ENCODE measurements at regions of chr2 and their contacts with region 1.

Region 1: DNA sequence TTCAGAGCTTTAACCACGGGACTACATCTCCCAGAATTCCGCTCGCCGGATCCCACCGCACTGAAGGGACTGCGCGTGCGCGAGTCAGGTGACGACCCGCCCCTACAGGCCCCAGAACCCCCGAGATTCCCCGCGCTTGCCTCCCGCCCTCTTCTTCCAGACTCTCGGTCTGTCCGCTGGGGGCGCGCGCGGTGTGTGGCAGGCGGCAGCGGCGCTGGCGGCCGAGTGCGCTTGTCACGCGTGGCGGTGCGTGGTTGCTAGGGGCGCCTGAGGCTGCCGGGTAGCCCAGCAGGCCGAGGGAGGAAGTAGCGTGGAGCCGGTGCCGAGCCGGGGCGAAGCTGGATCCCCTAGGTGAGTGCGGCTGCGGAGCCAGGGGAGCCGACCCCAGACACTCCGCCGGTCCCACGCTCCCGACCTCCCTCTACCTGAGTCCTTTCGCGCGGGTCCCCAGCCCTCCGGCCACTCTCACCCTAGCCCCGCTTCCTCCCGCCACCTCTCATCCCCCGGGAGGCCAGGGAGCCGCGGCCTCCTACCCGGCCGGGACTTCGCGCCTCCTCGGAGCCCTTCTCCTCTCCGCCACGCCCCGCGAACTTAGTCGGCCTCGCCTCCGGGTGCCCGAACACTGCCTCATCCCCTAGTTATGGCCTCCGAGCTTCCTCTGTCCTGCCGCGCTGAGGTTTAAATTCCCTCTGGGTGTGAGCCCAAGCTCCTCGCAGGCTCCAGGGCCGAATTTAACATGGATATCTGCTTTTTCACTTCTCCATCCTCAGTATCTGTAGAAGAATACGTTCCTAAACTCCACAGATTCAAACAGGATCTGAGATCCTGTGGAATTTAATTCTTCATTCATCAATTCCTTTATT is at the start of gene TTLL4:
- DNase-seq: peak; percentile 99
- ATAC-seq: peak; percentile 98
- H3K4me3 Mint-ChIP-seq: peak within 1 kb of the TSS; percentile 96
- H3K27ac Mint-ChIP-seq: peak within 1 kb of the TSS; percentile 80
- H3K4me1 Mint-ChIP-seq: peaks cover 20% of the 10 kb centered on the region
- H3K27me3 Mint-ChIP-seq: no peaks in the 10 kb centered on the region
- total RNA-seq, gene TTLL4: 33.7 to 46.6 TPM

Region 2: DNA sequence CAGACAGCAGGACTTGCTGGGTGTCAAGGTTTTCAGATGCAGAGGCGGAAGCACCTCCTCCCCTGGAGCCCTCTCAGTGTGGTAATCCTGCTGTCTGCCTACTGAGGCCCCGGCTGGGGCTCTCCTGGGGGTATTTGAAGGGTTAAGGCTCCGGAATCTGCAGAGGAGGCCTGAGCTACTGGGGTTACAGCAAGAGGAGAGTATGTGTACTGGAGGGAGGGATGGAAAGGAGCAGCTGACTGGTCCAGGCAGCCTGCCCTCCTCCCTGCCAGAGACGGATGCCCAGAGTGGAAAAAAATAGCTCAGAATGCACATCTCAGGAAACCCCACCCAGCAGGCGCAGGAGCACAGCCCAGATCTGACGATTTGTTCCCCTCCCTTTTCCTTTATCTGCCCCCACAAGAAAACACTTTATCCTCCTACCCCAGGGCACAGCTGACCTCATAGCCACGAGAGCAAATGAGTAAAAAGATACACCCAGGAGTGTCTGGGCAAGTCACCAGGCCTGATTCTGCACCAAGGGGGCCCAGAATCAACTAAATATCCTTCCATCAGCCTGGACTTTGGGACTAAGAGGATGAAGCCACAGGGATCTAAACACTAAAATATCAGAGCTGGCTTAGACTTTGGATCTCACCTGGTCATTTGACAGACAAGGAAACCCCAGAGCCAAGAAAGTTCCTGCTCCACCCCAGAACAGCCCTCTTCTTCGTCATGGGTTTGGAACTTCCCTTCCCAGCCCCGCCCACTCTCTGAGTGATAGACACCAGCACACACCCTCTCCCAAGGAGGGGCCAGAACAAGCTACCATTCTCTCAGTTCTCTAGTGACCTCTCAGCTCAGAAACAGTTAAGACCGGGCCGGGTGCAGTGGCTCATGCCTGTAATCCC is 424.1 kb before region 1 on chr2:
- CTCF ChIA-PET with region 1: no interaction called
- POLR2A ChIA-PET with region 1: no interaction called
- intact Hi-C with region 1: loop called in 1 of 2 experiments (anchors 5 kb)
- DNase-seq: peak; percentile 91
- ATAC-seq: peak; percentile 74
- H3K4me3 Mint-ChIP-seq: peak overlapping the region; percentile 80
- H3K27ac Mint-ChIP-seq: peak overlapping the region; percentile 99
- H3K4me1 Mint-ChIP-seq: peaks cover 88% of the 10 kb centered on the region
- H3K27me3 Mint-ChIP-seq: no peaks in the 10 kb centered on the region

Region 3: DNA sequence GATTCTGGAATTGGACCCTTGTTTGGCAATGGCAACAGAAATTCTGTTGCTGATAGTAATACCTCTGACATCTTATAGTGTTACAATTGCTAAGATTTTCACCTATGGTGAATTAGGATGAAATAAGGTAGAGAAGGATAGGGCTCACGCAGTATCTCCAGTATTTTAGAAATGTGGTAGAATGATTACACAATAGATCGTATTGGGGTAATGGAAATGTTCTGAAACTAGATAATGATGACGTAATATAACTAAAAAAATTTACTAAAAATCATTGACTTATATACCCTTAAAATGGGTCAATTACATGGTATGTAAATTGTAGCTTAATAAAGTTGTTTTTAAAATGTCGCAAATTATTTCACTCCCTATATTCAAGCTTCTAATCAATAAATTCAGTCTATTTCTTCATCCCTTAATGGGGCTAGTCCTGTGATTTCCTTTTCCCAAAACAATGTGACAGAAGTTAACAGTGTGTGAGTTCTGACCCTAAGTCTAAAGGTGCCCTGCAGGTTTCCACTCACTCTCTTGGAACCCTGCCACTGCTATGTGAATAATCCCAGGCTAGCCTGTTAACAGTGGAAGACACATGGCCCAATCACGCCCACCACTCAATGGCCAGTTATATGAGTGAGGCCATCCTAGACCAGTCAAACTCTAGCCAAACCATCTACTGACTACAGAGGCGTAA is 174.0 kb before region 1 on chr2:
- CTCF ChIA-PET with region 1: no interaction called
- POLR2A ChIA-PET with region 1: no interaction called
- intact Hi-C with region 1: no loop called
- DNase-seq: no peak
- ATAC-seq: no peak
- H3K4me3 Mint-ChIP-seq: no peak overlapping the region
- H3K27ac Mint-ChIP-seq: no peak overlapping the region
- H3K4me1 Mint-ChIP-seq: no peaks in the 10 kb centered on the region
- H3K27me3 Mint-ChIP-seq: no peaks in the 10 kb centered on the region

Region 4: DNA sequence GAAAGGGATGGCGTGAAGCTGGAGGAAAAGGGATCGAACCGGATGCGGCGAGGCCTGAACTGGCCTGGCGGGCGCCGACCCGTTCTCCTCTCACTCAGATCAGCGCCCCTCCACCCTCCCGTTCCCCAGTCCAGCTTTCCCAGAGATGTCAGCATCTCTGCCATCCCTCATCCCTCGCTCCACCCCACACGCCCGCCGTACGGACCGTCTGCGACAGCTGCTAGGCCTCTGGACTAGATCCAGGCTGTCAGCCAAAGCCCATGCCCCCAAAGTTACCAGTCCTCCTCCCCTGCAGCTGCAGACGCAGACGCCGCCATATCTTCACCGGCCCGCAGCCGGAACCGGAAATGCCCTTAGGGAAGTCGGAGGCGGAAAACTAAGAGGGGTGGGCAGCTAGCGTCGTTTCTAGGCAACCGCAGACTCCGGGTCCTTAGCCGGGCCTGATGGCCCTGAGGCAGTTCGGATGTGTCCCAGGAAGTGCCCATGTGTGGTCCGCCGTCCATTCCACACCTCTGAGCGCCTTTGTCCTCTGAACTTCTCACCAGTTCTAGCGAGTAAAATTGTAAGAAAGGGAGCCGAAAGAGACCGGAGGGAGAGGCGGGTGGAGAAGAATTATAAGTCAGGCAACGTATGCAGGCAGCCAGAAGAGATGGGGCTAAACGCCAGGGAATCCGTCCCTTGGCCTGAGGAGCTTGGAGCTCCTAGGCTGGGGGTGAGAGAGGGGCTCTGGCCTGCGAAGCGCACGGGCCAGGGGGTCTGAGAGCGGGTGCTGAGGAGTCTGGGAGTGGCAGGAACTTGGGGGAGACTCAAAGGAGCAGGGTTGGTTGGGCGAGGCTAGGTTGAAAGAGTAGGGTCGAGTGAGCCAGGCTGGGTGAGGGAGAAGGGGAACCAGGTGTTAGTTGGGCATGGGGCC is 39.0 kb before region 1 on chr2 and contains the starts of genes RNF25 and STK36:
- CTCF ChIA-PET with region 1: interaction called, 5 read pairs
- POLR2A ChIA-PET with region 1: interaction called, 5 read pairs
- intact Hi-C with region 1: loop called in 1 of 2 experiments (anchors 1 kb)
- DNase-seq: peak; percentile 90
- ATAC-seq: peak; percentile 98
- H3K4me3 Mint-ChIP-seq: peak within 1 kb of the TSS; percentile 95
- H3K27ac Mint-ChIP-seq: peak within 1 kb of the TSS; percentile 87
- H3K4me1 Mint-ChIP-seq: peaks cover 22% of the 10 kb centered on the region
- H3K27me3 Mint-ChIP-seq: no peaks in the 10 kb centered on the region
- total RNA-seq, gene RNF25: 14.1 to 29.2 TPM
- total RNA-seq, gene STK36: 13.1 to 19.3 TPM

Region 5: GRCh38 chr2:218727502-218728165 is 16.7 kb after region 1 on chr2:
- CTCF ChIA-PET with region 1: interaction called, 13 read pairs
- POLR2A ChIA-PET with region 1: no interaction called
- intact Hi-C with region 1: no loop called
- DNase-seq: peak; percentile 23
- ATAC-seq: no peak
- H3K4me3 Mint-ChIP-seq: no peak overlapping the region
- H3K27ac Mint-ChIP-seq: no peak overlapping the region
- H3K4me1 Mint-ChIP-seq: peaks cover 25% of the 10 kb centered on the region
- H3K27me3 Mint-ChIP-seq: no peaks in the 10 kb centered on the region

Region 6: GRCh38 chr2:218908721-218909619 is 198.1 kb after region 1 on chr2:
- CTCF ChIA-PET with region 1: no interaction called
- POLR2A ChIA-PET with region 1: no interaction called
- intact Hi-C with region 1: loop called in 1 of 2 experiments (anchors 1 kb)
- DNase-seq: peak; percentile 97
- ATAC-seq: peak; percentile 98
- H3K4me3 Mint-ChIP-seq: peak overlapping the region; percentile 85
- H3K27ac Mint-ChIP-seq: peak overlapping the region; percentile 83
- H3K4me1 Mint-ChIP-seq: peaks cover 13% of the 10 kb centered on the region
- H3K27me3 Mint-ChIP-seq: peaks cover 16% of the 10 kb centered on the region

Region 7: GRCh38 chr2:219675221-219675620 is 964.3 kb after region 1 on chr2:
- CTCF ChIA-PET with region 1: no interaction called
- POLR2A ChIA-PET with region 1: no interaction called
- intact Hi-C with region 1: no loop called
- DNase-seq: no peak
- ATAC-seq: no peak
- H3K4me3 Mint-ChIP-seq: no peak overlapping the region
- H3K27ac Mint-ChIP-seq: no peak overlapping the region
- H3K4me1 Mint-ChIP-seq: no peaks in the 10 kb centered on the region
- H3K27me3 Mint-ChIP-seq: peaks cover 16% of the 10 kb centered on the region

Measured in activated CD4-positive, alpha-beta T cell treated with anti-CD3 and anti-CD28 coated beads for 36 hours (primary cell).